ENCODE measurements at regions of chr12 and their contacts with region 1.

Region 1: DNA sequence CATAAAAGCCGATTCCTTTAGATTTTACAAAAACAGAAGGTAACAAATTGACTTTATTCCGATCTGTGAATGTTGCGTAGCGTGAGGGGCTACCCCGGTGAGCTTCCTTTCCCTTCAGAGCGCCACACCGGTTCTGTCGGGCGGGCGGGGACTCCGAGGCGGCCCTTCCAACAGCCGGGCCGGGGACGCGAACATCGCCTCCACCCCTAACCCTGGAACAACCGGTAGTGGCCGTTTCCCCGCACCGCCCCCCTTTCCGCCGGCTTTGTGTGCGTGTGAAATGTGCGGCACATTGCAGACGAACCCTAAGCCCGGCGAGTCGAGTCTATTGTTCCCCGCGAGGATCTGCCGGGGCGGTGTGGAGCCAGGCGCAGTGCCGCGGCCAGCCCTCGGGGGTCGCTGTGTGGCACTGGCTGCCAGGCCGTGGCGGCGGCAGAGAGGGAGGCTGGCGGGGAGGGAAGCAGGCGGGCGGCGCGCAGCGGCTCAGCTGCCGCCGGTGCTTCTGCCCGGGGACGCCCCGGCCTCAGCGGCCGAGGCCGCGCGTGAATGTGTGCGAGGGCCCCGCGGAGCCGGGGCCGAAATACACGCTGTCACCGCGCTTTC is 775 bp upstream of the ARID2 start:
- DNase-seq: peak; percentile 95
- H3K4me3 Mint-ChIP-seq: peak overlapping the region; percentile 81
- H3K27ac Mint-ChIP-seq: peak overlapping the region; percentile 99
- H3K4me1 Mint-ChIP-seq: peaks cover 14% of the 10 kb centered on the region
- H3K27me3 Mint-ChIP-seq: no peaks in the 10 kb centered on the region
- CTCF ChIP-seq: peak; percentile 86

Region 2: DNA sequence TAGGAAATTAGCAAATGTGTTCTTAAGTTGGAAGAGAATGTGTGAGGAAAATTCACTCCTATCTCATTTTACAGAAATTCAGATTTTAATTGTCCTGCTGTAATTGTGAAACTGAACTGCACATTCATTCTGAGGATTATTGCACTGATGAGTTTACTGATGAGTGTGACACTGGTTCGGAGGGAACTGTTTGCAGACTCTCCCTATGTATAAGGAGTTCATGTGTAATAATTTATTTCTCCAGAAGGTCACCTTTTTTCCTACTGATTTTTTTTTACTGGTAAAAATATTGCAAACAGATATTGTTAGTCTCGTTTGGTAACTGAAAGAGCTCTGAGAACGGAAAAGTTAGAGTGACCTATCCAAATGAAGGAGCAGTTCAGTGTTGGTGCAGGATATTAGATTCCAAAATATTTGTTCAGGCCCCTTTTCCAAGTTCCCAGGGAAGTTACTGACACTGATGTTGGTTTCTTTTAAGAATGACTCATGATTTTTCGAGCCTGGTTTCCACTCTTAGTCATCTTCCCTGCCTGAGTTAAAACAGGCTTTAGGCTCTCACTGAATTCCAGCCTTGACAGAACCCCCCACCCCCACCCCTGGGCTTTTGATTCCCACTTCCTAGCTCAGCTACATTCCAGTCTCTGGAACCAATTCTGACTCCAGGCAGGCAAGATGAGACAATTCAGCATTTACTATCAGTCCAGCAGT is 494.4 kb before region 1 on chr12:
- CTCF ChIA-PET with region 1: no interaction called
- POLR2A ChIA-PET with region 1: interaction called, 22 read pairs
- intact Hi-C with region 1: no loop called
- DNase-seq: peak; percentile 96
- H3K4me3 Mint-ChIP-seq: peak overlapping the region; percentile 5
- H3K27ac Mint-ChIP-seq: peak overlapping the region; percentile 77
- H3K4me1 Mint-ChIP-seq: peaks cover 36% of the 10 kb centered on the region
- H3K27me3 Mint-ChIP-seq: no peaks in the 10 kb centered on the region
- CTCF ChIP-seq: no peak

Region 3: GRCh38 chr12:45415393-45415817 is 313.3 kb before region 1 on chr12:
- CTCF ChIA-PET with region 1: interaction called, 3 read pairs
- POLR2A ChIA-PET with region 1: interaction called, 6 read pairs
- intact Hi-C with region 1: loop called (anchors 1 kb)
- DNase-seq: peak; percentile 98
- H3K4me3 Mint-ChIP-seq: no peak overlapping the region
- H3K27ac Mint-ChIP-seq: peak overlapping the region; percentile 46
- H3K4me1 Mint-ChIP-seq: peaks cover 9% of the 10 kb centered on the region
- H3K27me3 Mint-ChIP-seq: no peaks in the 10 kb centered on the region
- CTCF ChIP-seq: no peak

Region 4: DNA sequence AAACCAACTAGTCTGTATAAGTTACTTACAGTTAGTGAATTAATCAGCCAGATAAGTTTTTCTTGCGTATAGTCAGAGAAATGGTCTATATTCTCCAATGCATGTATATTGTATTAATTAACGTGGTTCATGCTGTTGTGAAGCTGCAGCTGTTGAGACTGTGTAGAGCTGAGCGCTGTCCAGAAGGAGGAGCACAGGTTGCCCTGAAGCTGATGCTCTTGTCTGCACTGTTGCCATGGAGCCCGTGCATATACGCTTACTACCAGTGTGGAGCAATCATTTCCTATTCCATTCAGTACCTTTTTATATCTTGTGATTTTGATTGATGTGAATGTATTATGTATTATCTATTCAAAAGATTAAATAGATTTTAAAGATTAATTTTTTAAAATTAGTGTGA is 73.5 kb before region 1 on chr12:
- CTCF ChIA-PET with region 1: interaction called, 5 read pairs
- POLR2A ChIA-PET with region 1: interaction called, 3 read pairs
- intact Hi-C with region 1: loop called (anchors 1 kb)
- DNase-seq: peak; percentile 62
- H3K4me3 Mint-ChIP-seq: no peak overlapping the region
- H3K27ac Mint-ChIP-seq: no peak overlapping the region
- H3K4me1 Mint-ChIP-seq: peaks cover 5% of the 10 kb centered on the region
- H3K27me3 Mint-ChIP-seq: no peaks in the 10 kb centered on the region
- CTCF ChIP-seq: no peak

Region 5: GRCh38 chr12:45756666-45757065 is 27.9 kb after region 1 on chr12:
- CTCF ChIA-PET with region 1: interaction called, 4 read pairs
- POLR2A ChIA-PET with region 1: interaction called, 10 read pairs
- intact Hi-C with region 1: no loop called
- DNase-seq: no peak
- H3K4me3 Mint-ChIP-seq: no peak overlapping the region
- H3K27ac Mint-ChIP-seq: no peak overlapping the region
- H3K4me1 Mint-ChIP-seq: peaks cover 13% of the 10 kb centered on the region
- H3K27me3 Mint-ChIP-seq: no peaks in the 10 kb centered on the region
- CTCF ChIP-seq: no peak

Region 6: DNA sequence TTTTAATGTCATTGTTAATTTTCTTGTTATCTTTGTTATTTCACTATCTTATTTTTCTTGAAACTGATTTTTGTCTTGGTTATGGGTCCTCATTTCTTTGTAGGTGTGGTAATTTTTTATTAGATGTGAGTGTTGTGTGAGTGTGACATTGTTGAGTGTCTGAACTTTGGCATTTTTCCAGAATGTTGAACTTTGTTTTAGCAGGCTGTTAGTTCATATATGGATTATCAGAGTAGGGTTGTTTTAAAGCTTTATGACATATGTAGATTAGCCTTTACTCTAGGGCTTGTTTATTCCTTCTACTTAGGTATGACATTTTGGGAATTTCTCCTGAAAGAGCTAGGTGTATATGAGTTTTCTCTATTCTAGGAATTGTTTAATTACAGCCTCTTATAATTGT is 104.7 kb after region 1 on chr12:
- CTCF ChIA-PET with region 1: no interaction called
- POLR2A ChIA-PET with region 1: no interaction called
- intact Hi-C with region 1: no loop called
- DNase-seq: no peak
- H3K4me3 Mint-ChIP-seq: no peak overlapping the region
- H3K27ac Mint-ChIP-seq: no peak overlapping the region
- H3K4me1 Mint-ChIP-seq: no peaks in the 10 kb centered on the region
- H3K27me3 Mint-ChIP-seq: no peaks in the 10 kb centered on the region
- CTCF ChIP-seq: no peak